Activated CD8-positive, alpha-beta memory T cell treated with anti-CD3 and anti-CD28 coated beads, Interleukin-2, amount 10 ng/mL, durations not matched to agents 7 days and 5 days (primary cell): ENCODE measurements at regions of chr5 and their contacts with region 1.

Region 1: GRCh38 chr5:151115274-151115905 is 34.6 kb upstream of the TNIP1 start:
- DNase-seq: peak; percentile 77
- ATAC-seq: peak; percentile 68
- H3K4me3 Mint-ChIP-seq: no peak overlapping the region
- H3K27ac Mint-ChIP-seq: no peak overlapping the region
- H3K4me1 Mint-ChIP-seq: no peaks in the 10 kb centered on the region
- H3K27me3 Mint-ChIP-seq: no peaks in the 10 kb centered on the region

Region 2: GRCh38 chr5:151058891-151059489 is 56.4 kb before region 1 on chr5:
- CTCF ChIA-PET with region 1: interaction called, 182 read pairs
- DNase-seq: no peak
- ATAC-seq: peak; percentile 21
- H3K4me3 Mint-ChIP-seq: no peak overlapping the region
- H3K27ac Mint-ChIP-seq: peak overlapping the region; percentile 77
- H3K4me1 Mint-ChIP-seq: peaks cover 31% of the 10 kb centered on the region
- H3K27me3 Mint-ChIP-seq: no peaks in the 10 kb centered on the region

Region 3: GRCh38 chr5:151086905-151087360 is 28.5 kb before region 1 on chr5:
- CTCF ChIA-PET with region 1: interaction called, 39 read pairs
- DNase-seq: peak; percentile 81
- ATAC-seq: peak; percentile 89
- H3K4me3 Mint-ChIP-seq: peak overlapping the region; percentile 73
- H3K27ac Mint-ChIP-seq: peak overlapping the region; percentile 66
- H3K4me1 Mint-ChIP-seq: peaks cover 60% of the 10 kb centered on the region
- H3K27me3 Mint-ChIP-seq: peaks cover 26% of the 10 kb centered on the region

Region 4: GRCh38 chr5:151132963-151133362 is 17.6 kb after region 1 on chr5:
- CTCF ChIA-PET with region 1: interaction called, 10 read pairs
- DNase-seq: no peak
- ATAC-seq: no peak
- H3K4me3 Mint-ChIP-seq: no peak overlapping the region
- H3K27ac Mint-ChIP-seq: no peak overlapping the region
- H3K4me1 Mint-ChIP-seq: peaks cover 40% of the 10 kb centered on the region
- H3K27me3 Mint-ChIP-seq: no peaks in the 10 kb centered on the region

Region 5: GRCh38 chr5:151164686-151165392 is 49.4 kb after region 1 on chr5:
- CTCF ChIA-PET with region 1: interaction called, 260 read pairs
- DNase-seq: peak; percentile 86
- ATAC-seq: peak; percentile 98
- H3K4me3 Mint-ChIP-seq: no peak overlapping the region
- H3K27ac Mint-ChIP-seq: no peak overlapping the region
- H3K4me1 Mint-ChIP-seq: peaks cover 4% of the 10 kb centered on the region
- H3K27me3 Mint-ChIP-seq: no peaks in the 10 kb centered on the region

Region 6: GRCh38 chr5:152142840-152143469 is 1027.6 kb after region 1 on chr5:
- CTCF ChIA-PET with region 1: no interaction called
- DNase-seq: peak; percentile 65
- ATAC-seq: peak; percentile 71
- H3K4me3 Mint-ChIP-seq: no peak overlapping the region
- H3K27ac Mint-ChIP-seq: no peak overlapping the region
- H3K4me1 Mint-ChIP-seq: no peaks in the 10 kb centered on the region
- H3K27me3 Mint-ChIP-seq: peaks cover 6% of the 10 kb centered on the region